Posterior vena cava (tissue), 2 donors: ENCODE measurements at regions of chr3 and their contacts with region 1.

Region 1: GRCh38 chr3:142279965-142280590 is 54.7 kb upstream of the GK5 start:
- DNase-seq: no peak

Region 2: DNA sequence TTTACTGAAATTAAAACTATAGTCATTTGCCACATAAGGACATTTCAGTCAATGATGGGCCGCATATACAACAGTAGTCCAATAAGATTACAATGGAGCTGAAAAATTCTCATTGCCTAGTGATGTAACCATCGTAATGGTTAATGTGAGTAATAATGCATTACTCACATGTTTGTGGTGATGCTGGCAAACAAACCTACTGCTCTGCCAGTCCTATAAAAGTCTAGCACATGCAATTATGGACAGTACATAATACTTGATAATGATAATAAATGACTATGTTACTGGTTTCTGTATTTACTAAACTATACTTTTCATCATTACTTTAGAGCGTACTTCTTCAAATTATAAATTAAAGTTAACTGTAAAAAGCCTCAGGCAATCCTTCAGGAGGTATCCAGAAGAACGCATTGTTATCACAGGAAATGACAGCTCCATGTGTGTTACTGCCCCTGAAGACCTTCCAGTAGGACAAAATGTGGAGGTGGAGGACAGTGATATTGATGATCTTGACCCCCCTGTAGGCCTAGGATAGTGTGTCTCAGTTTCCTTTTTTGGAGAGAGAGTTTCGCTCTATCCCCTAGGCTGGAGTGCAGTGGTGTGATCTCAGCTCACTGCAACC is 300.9 kb before region 1 on chr3:
- intact Hi-C with region 1: no loop called
- DNase-seq: no peak

Region 3: GRCh38 chr3:142129516-142130171 is 150.4 kb before region 1 on chr3:
- intact Hi-C with region 1: loop called in 1 of 2 experiments (anchors 10 kb)
- DNase-seq: no peak

Region 4: DNA sequence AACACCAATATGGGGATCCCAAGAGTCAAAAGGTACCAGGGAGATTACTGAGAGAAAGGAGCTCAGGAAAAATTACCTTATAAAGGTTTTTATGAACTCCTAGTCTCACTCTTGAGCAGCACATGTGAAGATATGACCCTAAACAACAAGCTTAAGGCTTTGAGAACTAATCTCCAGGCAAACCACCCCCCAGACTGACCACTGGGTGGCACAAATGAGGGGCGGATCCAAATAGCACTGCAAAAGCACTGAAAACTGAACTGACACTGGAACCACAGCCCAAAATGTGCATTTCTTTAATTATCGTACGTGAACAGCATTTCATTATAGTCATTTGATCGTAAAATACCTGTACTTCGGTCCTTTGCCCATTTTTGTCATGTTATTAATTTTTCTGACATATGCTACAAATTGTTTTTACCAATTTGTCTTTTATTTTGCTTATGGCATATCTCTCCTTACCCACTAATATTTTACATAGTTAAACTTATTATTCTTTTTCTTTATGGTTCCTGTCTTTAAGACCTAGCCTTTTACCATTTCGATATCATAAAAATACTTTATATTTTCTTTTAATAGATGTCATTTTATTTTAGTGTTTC is 99.2 kb before region 1 on chr3:
- intact Hi-C with region 1: loop called in 1 of 2 experiments (anchors 10 kb)
- DNase-seq: no peak